Colonic mucosa (tissue), 4 donors: ENCODE measurements at regions of chr17 and their contacts with region 1.

Region 1: GRCh38 chr17:43024407-43025289 is at the start of gene RND2:
- DNase-seq: peak; percentile 82
- H3K4me3 ChIP-seq: peak within 1 kb of the TSS; percentile 49
- H3K27ac ChIP-seq: no peak within 1 kb of the TSS
- H3K4me1 ChIP-seq: no peaks in the 10 kb centered on the region
- H3K27me3 ChIP-seq: no peaks in the 10 kb centered on the region
- CTCF ChIP-seq: peak; percentile 50
- total RNA-seq, gene RND2: 0.30 to 0.56 TPM

Region 2: DNA sequence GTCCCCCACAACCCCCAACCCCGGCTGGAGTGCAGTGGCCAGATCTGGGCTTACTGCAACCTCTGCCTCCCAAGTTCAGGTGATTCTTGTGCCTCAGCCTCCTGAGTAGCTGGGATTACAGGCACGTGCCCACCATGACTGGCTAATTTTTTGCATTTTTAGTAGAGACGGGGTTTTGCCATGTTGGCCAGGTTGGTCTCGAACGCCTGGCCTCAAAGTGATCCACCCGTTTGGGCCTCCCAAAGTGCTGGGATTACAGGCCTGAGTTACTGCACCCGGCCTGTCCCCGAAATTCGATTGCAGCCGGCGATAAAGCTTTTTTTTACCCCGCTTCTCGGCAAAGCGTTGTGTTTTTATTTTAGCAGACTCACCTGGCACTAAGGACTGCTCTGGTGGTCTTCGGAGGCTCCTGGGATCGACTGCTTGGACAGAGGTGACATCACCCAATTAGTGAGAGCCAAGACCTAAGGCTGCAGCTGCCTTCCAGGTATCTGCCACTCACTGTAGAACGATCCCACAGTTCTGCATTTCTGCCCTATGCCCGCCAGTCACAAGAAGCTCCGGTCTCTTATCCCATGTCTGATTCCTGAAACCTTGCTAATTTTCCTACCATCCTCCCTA is 292.0 kb after region 1 on chr17:
- intact Hi-C with region 1: loop called (anchors 10 kb)
- DNase-seq: no peak
- H3K4me3 ChIP-seq: no peak overlapping the region
- H3K27ac ChIP-seq: no peak overlapping the region
- H3K4me1 ChIP-seq: no peaks in the 10 kb centered on the region
- H3K27me3 ChIP-seq: no peaks in the 10 kb centered on the region
- CTCF ChIP-seq: no peak

Region 3: GRCh38 chr17:43341715-43342588 is 317.3 kb after region 1 on chr17:
- intact Hi-C with region 1: loop called (anchors 10 kb)
- DNase-seq: no peak
- H3K4me3 ChIP-seq: no peak overlapping the region
- H3K27ac ChIP-seq: no peak overlapping the region
- H3K4me1 ChIP-seq: no peaks in the 10 kb centered on the region
- H3K27me3 ChIP-seq: no peaks in the 10 kb centered on the region
- CTCF ChIP-seq: no peak